Ascending aorta (tissue), 2 donors: ENCODE measurements at regions of chr9 and their contacts with region 1.

Region 1: GRCh38 chr9:93453047-93453914 is at the start of gene FAM120AOS:
- DNase-seq: peak; percentile 78 to 96
- H3K4me3 ChIP-seq: peak within 1 kb of the TSS; percentile 63 to 68
- H3K27ac ChIP-seq: peak within 1 kb of the TSS; percentile 89 to 94
- H3K4me1 ChIP-seq: peaks cover 8 to 25% of the 10 kb centered on the region in 2 donors
- H3K27me3 ChIP-seq: no peaks in the 10 kb centered on the region
- CTCF ChIP-seq: no peak
- total RNA-seq, gene FAM120AOS: 19.9 TPM

Region 2: DNA sequence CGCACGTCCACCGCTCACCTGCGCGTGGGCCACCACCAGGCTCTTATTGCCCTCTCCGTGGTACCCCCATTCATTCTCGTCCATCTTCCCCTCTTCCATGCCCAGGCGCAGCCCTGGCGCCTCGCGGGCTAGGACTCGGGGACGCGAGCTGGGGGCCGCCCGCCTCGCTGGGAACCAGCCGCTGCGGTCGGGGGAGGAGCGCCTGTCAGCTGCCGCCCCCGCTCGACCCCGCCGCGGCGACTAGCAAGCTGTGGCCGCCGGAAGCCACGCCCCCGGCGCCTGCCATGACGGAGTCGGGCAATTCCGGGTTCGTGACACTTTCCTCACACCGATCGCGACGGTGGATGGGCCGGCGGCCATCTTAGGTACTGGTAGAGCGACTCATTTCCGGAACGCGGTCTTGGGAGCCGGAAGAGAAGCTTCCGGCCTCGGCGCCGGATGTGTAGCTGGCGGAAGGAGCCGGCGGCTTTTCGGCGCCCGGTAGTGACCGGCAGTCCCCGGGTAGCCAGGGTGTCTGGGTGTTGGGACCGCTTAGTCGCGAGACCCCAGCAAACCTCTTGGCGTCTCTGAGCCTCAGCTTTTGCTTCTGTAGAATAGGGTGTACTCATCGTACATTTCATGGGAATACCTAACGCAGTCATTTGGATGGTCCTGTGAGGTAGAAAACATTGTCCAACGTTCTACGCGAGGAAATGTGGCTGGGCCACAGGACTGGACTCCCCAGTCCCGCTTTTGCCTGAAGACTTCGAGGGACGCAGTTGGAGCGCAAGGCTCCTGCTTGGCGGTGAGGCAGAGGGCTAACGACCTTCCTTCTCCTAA is 783.2 kb before region 1 on chr9 and contains the start of gene IPPK:
- intact Hi-C with region 1: loop called (anchors 5 kb)
- DNase-seq: peak; percentile 93 to 100
- H3K4me3 ChIP-seq: peak within 1 kb of the TSS; percentile 78 to 98
- H3K27ac ChIP-seq: peak within 1 kb of the TSS; percentile 94 to 96
- H3K4me1 ChIP-seq: peaks cover 0 to 18% of the 10 kb centered on the region in 2 donors
- H3K27me3 ChIP-seq: no peaks in the 10 kb centered on the region
- CTCF ChIP-seq: no peak
- total RNA-seq, gene IPPK: 28.0 TPM

Region 3: DNA sequence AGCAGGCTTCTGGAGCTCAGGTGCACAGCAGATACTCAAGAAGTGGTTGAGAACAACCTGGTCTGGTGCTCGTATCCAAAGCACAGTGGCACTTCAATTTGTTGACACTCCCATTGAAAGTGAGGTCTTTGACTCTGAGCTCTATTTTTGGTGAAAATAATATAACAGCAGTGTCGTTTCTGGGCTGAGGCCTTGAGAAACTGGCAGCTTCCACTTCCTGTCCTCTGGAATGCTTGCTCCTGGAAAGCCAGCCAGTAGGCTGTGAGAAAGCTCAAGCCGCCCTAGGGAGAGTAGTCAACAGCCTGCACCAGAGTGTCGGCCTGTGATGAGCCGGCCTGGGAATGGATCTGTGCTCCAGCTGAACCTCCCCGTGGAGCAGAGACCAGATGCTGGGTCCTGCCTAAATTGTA is 401.6 kb before region 1 on chr9:
- intact Hi-C with region 1: loop called (anchors 2 kb)
- DNase-seq: peak; percentile 40 to 89
- H3K4me3 ChIP-seq: no peak overlapping the region
- H3K27ac ChIP-seq: peak overlapping the region; percentile 90 to 92
- H3K4me1 ChIP-seq: peaks cover 13 to 47% of the 10 kb centered on the region in 2 donors
- H3K27me3 ChIP-seq: no peaks in the 10 kb centered on the region
- CTCF ChIP-seq: no peak

Region 4: DNA sequence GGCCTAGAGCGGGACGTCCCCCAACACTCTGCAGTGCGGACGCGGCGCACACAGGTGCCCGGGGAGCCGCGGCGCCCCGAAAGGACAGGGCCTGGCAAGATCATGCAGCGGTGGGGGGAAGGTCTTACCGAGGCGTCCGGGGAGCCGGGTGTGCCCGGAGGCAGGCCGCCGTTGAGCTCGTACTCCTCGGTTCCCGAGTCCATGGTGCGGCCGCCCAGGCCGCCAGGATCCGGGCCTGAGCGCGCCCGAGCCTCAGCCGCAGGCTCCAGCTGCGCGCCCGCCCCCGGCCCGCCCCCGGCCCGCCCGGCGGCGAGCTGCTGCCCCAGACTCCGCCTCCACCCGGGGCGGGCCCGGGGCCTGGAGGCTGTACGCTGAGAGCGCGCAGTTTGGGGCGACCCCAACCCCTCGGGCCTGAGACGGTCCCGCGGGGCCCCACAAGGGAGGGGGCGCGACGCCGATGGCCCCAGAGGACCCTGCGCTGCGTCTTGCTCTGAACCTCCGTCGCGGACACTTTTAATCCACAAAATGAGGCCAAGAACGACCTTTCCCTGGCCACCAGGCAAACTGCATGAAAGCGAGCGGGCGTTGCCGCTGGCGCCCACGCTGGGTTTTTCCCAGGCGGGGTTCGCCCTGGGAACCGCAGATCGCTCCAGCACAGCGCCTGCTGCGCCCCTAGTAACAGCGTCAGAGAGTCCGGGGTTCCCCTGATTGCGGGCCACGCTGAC is 319.1 kb before region 1 on chr9 and contains the start of gene NINJ1:
- intact Hi-C with region 1: loop called (anchors 5 kb)
- DNase-seq: peak in 1 of 2 donors; percentile 86
- H3K4me3 ChIP-seq: peak within 1 kb of the TSS; percentile 77 to 91
- H3K27ac ChIP-seq: peak within 1 kb of the TSS; percentile 98 to 99
- H3K4me1 ChIP-seq: peaks cover 27 to 38% of the 10 kb centered on the region in 2 donors
- H3K27me3 ChIP-seq: no peaks in the 10 kb centered on the region
- CTCF ChIP-seq: peak in 1 of 3 experiments; percentile 21
- total RNA-seq, gene NINJ1: 156 TPM

Region 5: DNA sequence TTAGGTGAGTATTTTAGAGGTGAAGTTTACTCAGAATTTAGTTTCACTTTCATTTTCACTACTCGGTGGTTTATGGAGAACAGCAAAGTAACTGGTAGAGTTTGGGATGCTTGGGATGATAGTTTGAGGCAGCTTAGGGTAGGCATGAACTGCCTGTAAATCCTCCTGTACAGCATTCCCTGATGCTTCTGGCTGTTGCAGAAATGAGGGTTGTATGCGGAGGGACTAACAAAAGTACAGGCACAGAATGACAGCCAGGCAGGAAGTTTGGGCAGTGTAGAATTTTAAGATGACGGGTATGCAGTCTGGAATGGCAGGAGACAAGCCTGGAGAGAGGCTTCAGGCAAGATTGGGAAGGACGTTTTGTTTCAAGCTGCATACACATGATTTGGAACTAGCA is 48.1 kb after region 1 on chr9:
- intact Hi-C with region 1: loop called (anchors 5 kb)
- DNase-seq: no peak
- H3K4me3 ChIP-seq: peak overlapping the region; percentile 50 to 58
- H3K27ac ChIP-seq: peak overlapping the region; percentile 51 to 56
- H3K4me1 ChIP-seq: peaks cover 0 to 7% of the 10 kb centered on the region in 2 donors
- H3K27me3 ChIP-seq: no peaks in the 10 kb centered on the region
- CTCF ChIP-seq: no peak